Posterior vena cava (tissue), 2 donors: ENCODE measurements at regions of chr4 and their contacts with region 1.

Region 1: DNA sequence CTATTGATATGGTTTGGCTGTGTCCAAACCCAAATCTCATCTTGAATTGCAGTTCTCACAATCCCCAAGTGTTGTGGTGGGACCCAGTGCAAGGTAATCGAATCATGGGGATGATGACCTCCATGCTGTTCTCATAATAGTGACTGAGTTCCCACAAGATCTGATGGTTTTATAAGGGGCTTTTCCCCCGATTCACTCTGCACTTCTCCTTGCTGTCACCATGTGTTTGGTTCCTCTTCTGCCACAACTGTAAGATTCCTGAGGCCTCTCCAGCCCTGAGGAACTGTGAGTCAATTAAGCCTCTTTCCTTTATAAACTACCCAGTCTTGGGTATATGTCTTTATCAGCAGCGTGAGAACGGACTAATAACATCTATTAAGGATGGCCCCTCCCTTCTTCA is 68.8 kb downstream of the FBXW7 start:
- DNase-seq: no peak

Region 2: GRCh38 chr4:152424977-152425376 is 42.1 kb before region 1 on chr4:
- intact Hi-C with region 1: loop called in 1 of 2 experiments (anchors 2 kb)
- DNase-seq: no peak